PC-3 (cell line): ENCODE measurements at regions of chr1 and their contacts with region 1.

Region 1: DNA sequence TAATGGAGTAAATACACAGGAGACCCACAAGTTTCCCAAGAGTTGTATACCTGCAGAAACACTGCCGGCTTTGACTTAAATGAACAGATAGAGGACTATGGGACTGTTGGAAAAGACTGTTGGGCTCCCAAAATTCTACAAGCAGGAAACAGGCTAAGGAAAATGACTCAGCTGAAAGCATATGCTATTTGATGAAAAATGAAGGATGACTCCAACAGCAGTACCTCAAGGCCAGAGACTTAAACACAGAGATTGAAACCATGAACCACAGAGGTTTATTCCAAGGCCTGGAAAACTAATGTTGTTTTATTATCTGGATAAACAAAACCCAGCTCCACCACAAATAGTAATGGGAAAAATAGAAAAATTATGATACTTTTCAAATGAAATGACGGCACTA is 187.7 kb downstream of the TNFSF18 start:
- DNase-seq: peak; percentile 30
- ATAC-seq: no peak
- H3K4me3 ChIP-seq: no peak overlapping the region
- H3K27ac ChIP-seq: no peak overlapping the region
- H3K4me1 ChIP-seq: peaks cover 9% of the 10 kb centered on the region
- H3K27me3 ChIP-seq: no peaks in the 10 kb centered on the region
- CTCF ChIP-seq: no peak

Region 2: DNA sequence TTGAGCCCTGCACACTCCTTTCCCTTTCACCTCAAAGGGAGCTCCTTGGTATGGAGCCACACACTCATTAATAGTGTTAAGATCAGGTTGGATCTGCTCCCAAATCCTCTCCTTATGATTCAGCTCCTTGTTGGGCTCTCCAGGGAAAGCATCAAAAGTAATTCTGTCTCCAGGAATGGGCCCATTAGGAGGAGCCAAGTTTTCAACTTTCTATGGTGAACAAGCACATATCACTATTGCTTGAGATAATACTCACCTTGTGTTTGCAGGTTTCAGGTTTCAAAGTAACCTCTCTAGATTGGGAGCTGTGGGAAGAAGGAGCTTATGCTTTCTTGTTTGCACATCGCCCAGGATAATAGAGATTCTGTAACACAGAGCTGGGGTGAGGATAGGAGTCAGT is 22.9 kb after region 1 on chr1:
- CTCF ChIA-PET with region 1: no interaction called
- POLR2A ChIA-PET with region 1: no interaction called
- intact Hi-C with region 1: loop called (anchors 1 kb)
- DNase-seq: peak; percentile 90
- ATAC-seq: peak; percentile 61
- H3K4me3 ChIP-seq: no peak overlapping the region
- H3K27ac ChIP-seq: peak overlapping the region; percentile 15
- H3K4me1 ChIP-seq: peaks cover 42% of the 10 kb centered on the region
- H3K27me3 ChIP-seq: no peaks in the 10 kb centered on the region
- CTCF ChIP-seq: no peak

Region 3: GRCh38 chr1:172895050-172895460 is 32.0 kb after region 1 on chr1:
- CTCF ChIA-PET with region 1: no interaction called
- POLR2A ChIA-PET with region 1: interaction called, 14 read pairs
- intact Hi-C with region 1: no loop called
- DNase-seq: peak; percentile 54
- ATAC-seq: peak; percentile 66
- H3K4me3 ChIP-seq: peak overlapping the region; percentile 14; the same call in 1 of the 2 replicates
- H3K27ac ChIP-seq: no peak overlapping the region
- H3K4me1 ChIP-seq: peaks cover 39% of the 10 kb centered on the region
- H3K27me3 ChIP-seq: no peaks in the 10 kb centered on the region
- CTCF ChIP-seq: no peak

Region 4: DNA sequence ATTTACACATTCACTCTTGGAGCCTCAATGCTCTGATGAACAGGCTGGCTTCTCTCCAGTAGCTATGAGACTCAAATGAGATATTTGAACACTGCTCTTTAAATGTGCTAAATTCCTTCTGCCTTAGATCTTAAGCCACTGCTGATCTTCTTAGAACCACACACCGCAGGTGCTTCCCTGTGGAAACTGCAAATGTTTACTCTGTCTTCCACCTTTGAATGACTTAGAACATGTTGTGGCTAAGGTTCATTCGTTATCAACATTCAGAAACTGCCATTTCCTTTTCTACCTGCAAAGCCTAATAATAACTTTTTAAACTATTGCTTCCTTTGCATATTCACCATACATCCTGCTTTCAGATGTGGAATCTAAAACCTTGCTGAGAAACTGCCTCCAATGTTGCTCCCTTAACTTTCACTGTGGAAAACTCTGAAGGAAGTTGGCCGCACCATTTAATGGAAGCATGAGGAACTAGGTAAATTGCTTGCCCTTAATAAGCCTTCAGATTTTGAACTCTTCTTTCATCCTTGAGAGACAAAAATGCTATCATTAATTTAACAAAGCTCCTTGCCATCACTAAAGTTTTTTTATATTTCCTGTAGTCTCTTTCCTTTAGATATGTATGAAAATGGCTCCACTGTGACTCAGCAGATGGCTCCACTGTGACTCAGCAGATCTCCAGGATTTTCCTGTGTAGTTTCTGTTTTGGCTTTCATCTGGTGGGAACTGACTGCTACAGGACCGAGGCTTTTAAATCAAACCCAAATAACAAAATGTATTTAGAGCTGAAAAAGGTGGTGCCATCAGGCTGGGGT is 44.0 kb after region 1 on chr1:
- CTCF ChIA-PET with region 1: no interaction called
- POLR2A ChIA-PET with region 1: interaction called, 5 read pairs
- intact Hi-C with region 1: loop called (anchors 1 kb)
- DNase-seq: peak; percentile 99
- ATAC-seq: peak; percentile 25
- H3K4me3 ChIP-seq: no peak overlapping the region; the same call in 1 of the 2 replicates
- H3K27ac ChIP-seq: peak overlapping the region; percentile 77
- H3K4me1 ChIP-seq: peaks cover 64% of the 10 kb centered on the region
- H3K27me3 ChIP-seq: no peaks in the 10 kb centered on the region
- CTCF ChIP-seq: no peak

Region 5: GRCh38 chr1:172917972-172918371 is 54.9 kb after region 1 on chr1:
- CTCF ChIA-PET with region 1: interaction called, 3 read pairs
- POLR2A ChIA-PET with region 1: no interaction called
- intact Hi-C with region 1: loop called (anchors 1 kb)
- DNase-seq: peak; percentile 100
- ATAC-seq: peak; percentile 89
- H3K4me3 ChIP-seq: peak overlapping the region; percentile 4; the same call in 1 of the 2 replicates
- H3K27ac ChIP-seq: peak overlapping the region; percentile 72
- H3K4me1 ChIP-seq: peaks cover 63% of the 10 kb centered on the region
- H3K27me3 ChIP-seq: no peaks in the 10 kb centered on the region
- CTCF ChIP-seq: no peak

Region 6: GRCh38 chr1:172935062-172935592 is 72.1 kb after region 1 on chr1:
- CTCF ChIA-PET with region 1: no interaction called
- POLR2A ChIA-PET with region 1: no interaction called
- intact Hi-C with region 1: loop called (anchors 1 kb)
- DNase-seq: no peak
- ATAC-seq: no peak
- H3K4me3 ChIP-seq: no peak overlapping the region
- H3K27ac ChIP-seq: peak overlapping the region; percentile 70
- H3K4me1 ChIP-seq: peaks cover 34% of the 10 kb centered on the region
- H3K27me3 ChIP-seq: no peaks in the 10 kb centered on the region
- CTCF ChIP-seq: no peak

Region 7: DNA sequence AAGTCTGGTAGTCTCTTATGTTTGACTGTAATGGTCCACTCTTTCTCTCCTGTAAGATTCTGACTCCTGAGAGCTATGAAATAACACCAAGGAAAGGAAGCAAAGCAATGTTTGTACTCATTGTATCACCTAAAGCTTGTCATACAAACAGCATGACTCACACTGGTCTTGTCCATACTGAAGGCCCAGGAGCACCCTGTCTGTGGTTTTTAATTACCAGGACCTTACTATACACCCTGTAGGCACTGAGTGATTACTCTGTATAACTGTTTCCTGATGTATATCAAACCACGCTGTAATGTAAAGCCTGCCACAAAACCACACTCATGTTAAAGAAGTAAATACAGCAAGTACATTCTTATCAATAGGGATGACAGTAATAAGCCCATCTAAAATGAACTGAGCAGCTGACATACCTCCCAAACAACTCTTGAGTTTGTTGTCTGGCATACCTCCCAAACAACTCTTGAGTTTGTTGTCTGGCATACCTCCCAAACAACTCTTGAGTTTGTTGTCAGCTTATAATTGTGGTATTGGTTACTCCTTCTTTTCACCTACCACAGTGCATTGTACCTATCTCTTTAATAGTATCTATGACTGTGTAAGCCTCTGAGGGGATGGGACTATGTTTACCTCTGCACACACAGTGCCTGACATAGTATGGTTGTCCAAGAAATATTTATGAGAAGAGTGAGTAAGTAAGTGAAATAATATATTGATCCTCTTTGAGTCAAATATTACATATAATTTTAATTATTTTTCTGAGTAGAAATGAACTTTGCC is 199.3 kb after region 1 on chr1:
- CTCF ChIA-PET with region 1: interaction called, 3 read pairs
- POLR2A ChIA-PET with region 1: no interaction called
- intact Hi-C with region 1: loop called (anchors 1 kb)
- DNase-seq: peak; percentile 100
- ATAC-seq: peak; percentile 100
- H3K4me3 ChIP-seq: no peak overlapping the region
- H3K27ac ChIP-seq: peak overlapping the region; percentile 43
- H3K4me1 ChIP-seq: peaks cover 36% of the 10 kb centered on the region
- H3K27me3 ChIP-seq: no peaks in the 10 kb centered on the region
- CTCF ChIP-seq: no peak

Region 8: GRCh38 chr1:173164686-173165085 is 301.7 kb after region 1 on chr1:
- CTCF ChIA-PET with region 1: no interaction called
- POLR2A ChIA-PET with region 1: no interaction called
- intact Hi-C with region 1: no loop called
- DNase-seq: no peak
- ATAC-seq: no peak
- H3K4me3 ChIP-seq: no peak overlapping the region
- H3K27ac ChIP-seq: no peak overlapping the region
- H3K4me1 ChIP-seq: peaks cover 21% of the 10 kb centered on the region
- H3K27me3 ChIP-seq: no peaks in the 10 kb centered on the region
- CTCF ChIP-seq: no peak

Region 9: DNA sequence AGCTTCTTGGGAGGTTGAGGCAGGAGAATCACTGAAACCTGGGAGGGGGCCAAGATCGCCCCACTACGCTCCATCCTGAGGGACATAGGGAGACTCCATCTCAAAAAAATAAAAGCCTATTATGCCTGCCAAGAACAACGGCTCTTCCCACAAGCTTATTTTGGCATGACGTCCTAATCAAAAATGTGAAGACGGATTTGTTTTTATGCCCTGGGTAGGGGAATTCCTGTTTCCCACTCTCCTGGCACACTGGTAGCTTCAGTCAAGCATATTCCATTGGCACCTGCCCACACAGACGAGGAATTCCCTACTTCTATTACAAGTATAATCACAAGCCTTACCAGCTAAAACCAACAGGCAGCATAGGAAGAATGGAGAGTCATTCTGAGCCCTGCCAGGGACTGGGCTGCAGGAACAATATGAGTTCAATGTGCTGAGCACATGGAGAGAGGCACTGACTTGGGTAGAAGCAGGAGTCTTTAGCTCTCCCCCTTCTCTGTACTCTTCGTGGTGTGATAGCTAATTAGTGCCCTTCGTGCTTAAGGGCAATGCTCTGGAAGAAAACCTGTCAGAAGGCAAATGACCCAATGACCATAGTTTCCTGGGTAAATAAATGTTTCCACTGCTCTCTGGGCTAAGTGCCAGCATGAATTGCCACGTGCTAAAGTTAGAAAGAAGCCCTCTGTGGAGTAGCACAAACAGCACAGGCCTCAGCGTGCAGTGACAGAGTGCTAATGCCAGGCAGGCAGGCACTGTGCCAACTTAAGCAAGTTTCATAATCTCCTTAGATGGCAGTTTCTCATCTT is 327.3 kb after region 1 on chr1:
- CTCF ChIA-PET with region 1: no interaction called
- POLR2A ChIA-PET with region 1: no interaction called
- intact Hi-C with region 1: no loop called
- DNase-seq: peak; percentile 86
- ATAC-seq: peak; percentile 35
- H3K4me3 ChIP-seq: no peak overlapping the region
- H3K27ac ChIP-seq: no peak overlapping the region
- H3K4me1 ChIP-seq: peaks cover 13% of the 10 kb centered on the region; the same call in 1 of the 2 replicates
- H3K27me3 ChIP-seq: no peaks in the 10 kb centered on the region
- CTCF ChIP-seq: no peak

Region 10: DNA sequence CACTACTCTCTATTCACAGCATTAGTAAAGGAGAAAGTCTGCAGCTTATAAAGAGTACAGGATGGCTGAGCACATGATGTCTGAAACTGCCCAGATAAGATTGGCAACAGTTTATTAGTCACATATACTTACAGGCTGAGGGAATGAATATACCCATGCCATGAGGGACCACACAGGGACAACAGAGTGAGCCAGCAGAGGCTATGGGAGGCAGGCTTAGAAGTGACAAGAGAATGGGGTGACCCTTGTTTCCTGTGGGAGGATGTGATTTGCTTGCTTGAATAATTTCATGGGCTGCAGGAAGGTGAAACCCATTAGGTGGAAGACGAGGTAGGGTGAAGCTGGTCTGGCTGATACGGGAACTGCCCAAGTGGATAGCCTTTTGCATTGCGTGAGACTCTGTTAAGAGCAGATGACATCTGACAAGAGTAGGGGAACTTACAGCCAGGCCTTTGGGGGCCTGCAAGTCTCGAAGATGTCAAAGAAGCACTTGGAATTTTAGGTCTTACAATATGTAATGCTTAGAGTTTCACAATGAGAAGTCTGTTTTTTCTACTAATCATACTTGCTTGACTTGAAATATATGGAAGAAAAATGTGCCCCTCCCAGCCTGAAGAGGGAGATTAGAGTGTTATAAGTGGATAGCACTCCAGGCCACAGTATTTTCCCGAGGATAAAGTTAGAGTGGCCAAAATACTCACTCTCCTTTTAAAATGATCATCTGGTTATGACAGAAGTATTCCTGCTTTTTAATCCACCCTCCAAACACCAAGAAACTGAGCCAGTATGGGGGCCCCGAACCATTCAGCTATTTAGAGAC is 378.7 kb after region 1 on chr1:
- CTCF ChIA-PET with region 1: no interaction called
- POLR2A ChIA-PET with region 1: no interaction called
- intact Hi-C with region 1: no loop called
- DNase-seq: no peak
- ATAC-seq: no peak
- H3K4me3 ChIP-seq: no peak overlapping the region
- H3K27ac ChIP-seq: no peak overlapping the region
- H3K4me1 ChIP-seq: no peaks in the 10 kb centered on the region
- H3K27me3 ChIP-seq: no peaks in the 10 kb centered on the region
- CTCF ChIP-seq: no peak